ENCODE measurements at regions of chr2 and their contacts with region 1.

Region 1: GRCh38 chr2:85635636-85636035 is 19.6 kb downstream of the USP39 start:
- DNase-seq: no peak
- H3K4me3 Mint-ChIP-seq: no peak overlapping the region
- H3K27ac Mint-ChIP-seq: no peak overlapping the region
- H3K4me1 Mint-ChIP-seq: peaks cover 7% of the 10 kb centered on the region
- H3K27me3 Mint-ChIP-seq: no peaks in the 10 kb centered on the region

Region 2: DNA sequence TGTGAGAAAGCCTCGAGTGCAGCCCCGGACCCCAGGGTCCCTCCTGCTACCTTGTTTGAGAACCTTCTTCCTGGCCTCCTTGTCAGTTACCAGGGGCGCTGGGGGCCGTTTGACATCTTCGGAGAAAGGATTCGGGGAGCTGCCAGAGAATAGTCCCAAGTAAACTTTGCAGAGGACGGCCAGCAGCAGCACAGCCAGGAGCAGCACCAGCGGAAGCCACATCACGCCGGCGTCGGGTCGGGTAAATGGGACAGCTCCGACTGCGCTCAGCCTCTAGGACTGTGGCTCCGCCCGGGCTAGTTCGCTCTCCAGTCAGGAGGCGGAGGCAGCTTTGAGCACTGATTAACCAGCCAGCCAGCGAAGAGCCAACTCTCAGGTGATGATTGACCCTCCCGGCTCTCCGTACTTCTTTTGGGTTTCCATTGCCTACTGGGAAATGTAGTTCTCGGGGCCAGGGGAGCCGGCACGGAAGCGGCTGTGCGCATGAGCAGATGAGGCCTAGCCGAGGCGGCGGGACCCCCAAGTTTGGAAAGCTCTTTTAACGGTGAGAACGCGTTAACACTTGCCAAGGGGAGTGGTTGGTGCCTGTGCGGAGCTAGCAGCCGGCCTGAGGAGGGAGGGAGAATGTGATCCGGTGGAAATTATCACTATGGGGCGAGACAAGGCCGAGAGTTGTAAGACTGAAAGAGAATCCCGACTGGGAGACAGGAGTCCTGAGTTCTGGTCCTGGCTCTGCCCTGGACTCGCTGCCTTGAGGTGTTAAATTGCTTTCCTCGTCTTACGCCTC is 281.2 kb before region 1 on chr2 and contains the starts of genes ELMOD3 and RETSAT:
- intact Hi-C with region 1: no loop called
- DNase-seq: peak; percentile 97
- H3K4me3 Mint-ChIP-seq: peak within 1 kb of the TSS; percentile 99
- H3K27ac Mint-ChIP-seq: peak within 1 kb of the TSS; percentile 97
- H3K4me1 Mint-ChIP-seq: peaks cover 31% of the 10 kb centered on the region
- H3K27me3 Mint-ChIP-seq: no peaks in the 10 kb centered on the region
- total RNA-seq, gene ELMOD3: 17.0 and 18.9 TPM in 2 replicates
- total RNA-seq, gene RETSAT: 26.3 and 29.6 TPM in 2 replicates

Region 3: GRCh38 chr2:85678794-85679672 is 43.4 kb after region 1 on chr2:
- intact Hi-C with region 1: loop called (anchors 2 kb)
- DNase-seq: peak; percentile 69
- H3K4me3 Mint-ChIP-seq: no peak overlapping the region
- H3K27ac Mint-ChIP-seq: no peak overlapping the region
- H3K4me1 Mint-ChIP-seq: peaks cover 26% of the 10 kb centered on the region
- H3K27me3 Mint-ChIP-seq: peaks cover 7% of the 10 kb centered on the region

Region 4: DNA sequence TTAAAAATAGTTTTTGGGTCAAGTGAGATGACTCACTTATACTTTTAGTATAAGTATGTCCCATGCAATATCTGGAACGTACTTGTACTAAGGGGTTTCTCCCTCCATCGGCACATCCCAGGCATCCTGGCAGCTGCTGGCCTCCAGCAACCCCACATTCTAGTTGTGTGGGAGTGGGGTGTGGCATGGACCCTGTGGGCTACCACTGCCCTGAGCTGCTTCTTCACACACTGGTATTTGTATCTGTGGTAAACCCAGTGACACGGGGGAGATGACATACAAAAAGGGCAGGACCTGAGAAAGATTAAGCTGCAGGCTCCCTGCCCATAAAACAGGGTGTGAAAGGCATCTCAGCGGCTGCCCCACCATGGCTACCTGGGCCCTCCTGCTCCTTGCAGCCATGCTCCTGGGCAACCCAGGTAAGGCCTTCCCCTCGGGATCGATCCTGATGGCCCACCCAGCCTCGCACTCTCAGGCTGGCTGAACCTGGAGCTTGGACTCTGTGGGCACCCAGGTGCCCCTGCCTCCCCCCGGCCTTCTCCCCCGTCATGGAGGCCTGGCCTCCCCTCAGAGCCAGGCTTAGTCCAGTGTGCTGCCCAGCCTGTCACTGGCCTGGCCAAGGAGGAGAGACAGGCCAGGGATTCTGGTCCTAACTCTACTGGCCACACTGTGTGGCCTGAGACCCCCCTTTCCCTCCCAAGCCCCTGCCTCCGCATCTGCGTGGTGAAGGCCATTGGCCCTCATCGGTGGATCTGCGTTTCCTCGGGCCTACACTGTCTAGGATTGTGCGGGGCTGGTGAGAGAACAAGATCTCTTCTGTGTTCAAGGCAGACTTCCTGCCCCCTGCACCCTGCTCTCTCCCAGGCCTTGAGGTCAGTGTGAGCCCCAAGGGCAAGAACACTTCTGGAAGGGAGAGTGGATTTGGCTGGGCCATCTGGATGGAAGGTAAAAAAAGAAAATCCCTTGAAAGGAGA is 58.7 kb after region 1 on chr2 and contains the start of gene GNLY:
- intact Hi-C with region 1: no loop called
- DNase-seq: no peak
- H3K4me3 Mint-ChIP-seq: no peak within 1 kb of the TSS
- H3K27ac Mint-ChIP-seq: peak within 1 kb of the TSS; percentile 33
- H3K4me1 Mint-ChIP-seq: peaks cover 20% of the 10 kb centered on the region
- H3K27me3 Mint-ChIP-seq: peaks cover 6% of the 10 kb centered on the region
- total RNA-seq, gene GNLY: 21.9 and 23.5 TPM in 2 replicates

Region 5: GRCh38 chr2:85712849-85713602 is 77.4 kb after region 1 on chr2:
- intact Hi-C with region 1: no loop called
- DNase-seq: no peak
- H3K4me3 Mint-ChIP-seq: no peak overlapping the region
- H3K27ac Mint-ChIP-seq: no peak overlapping the region
- H3K4me1 Mint-ChIP-seq: peaks cover 22% of the 10 kb centered on the region
- H3K27me3 Mint-ChIP-seq: peaks cover 23% of the 10 kb centered on the region